BJ (cell line): ENCODE measurements at regions of chr22 and their contacts with region 1.

Region 1: DNA sequence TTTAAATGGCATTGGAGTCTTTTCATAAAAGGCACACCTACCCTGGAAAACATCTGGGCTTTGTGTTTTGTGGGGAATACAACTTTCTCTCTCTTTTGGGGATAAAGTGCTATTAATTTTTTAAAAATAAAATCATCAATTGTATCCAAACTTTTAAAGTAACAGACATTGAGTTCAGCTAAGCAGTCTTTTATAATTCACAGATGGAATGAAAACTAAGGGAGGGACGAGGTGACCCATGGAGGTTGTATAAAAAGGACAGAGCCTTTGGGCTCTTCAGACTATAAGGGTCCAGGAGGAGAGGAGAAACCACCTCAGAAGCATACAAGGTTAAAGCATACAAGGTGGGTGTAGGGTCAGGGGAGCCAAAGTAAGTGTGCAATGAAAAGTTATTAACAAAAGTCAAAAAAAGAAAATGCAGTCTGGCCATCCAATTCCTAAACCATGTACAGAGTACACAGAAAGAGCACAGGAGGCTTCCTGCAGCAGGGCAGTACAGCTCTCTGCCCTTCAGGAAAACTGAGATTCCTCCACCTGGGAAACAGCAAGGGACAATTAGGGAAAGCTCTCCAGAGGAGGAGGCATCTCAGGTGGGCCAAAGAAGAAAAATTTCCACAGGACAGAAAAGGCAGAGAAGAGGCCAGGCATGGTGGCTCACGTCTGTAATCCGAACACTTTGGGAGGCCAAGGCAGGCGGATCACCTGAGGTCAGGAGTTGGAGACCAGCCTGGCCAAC is 10.5 kb downstream of the KLHL22 start:
- DNase-seq: no peak
- H3K4me3 ChIP-seq: no peak overlapping the region
- H3K27me3 ChIP-seq: no peaks in the 10 kb centered on the region
- CTCF ChIP-seq: no peak

Region 2: GRCh38 chr22:20503816-20504215 is 18.7 kb after region 1 on chr22:
- CTCF ChIA-PET with region 1: no interaction called
- POLR2A ChIA-PET with region 1: no interaction called
- DNase-seq: no peak
- H3K4me3 ChIP-seq: no peak overlapping the region
- H3K27me3 ChIP-seq: no peaks in the 10 kb centered on the region
- CTCF ChIP-seq: no peak

Region 3: GRCh38 chr22:20531315-20532201 is 46.4 kb after region 1 on chr22:
- CTCF ChIA-PET with region 1: no interaction called
- POLR2A ChIA-PET with region 1: interaction called, 10 read pairs
- DNase-seq: no peak
- H3K4me3 ChIP-seq: no peak overlapping the region
- H3K27me3 ChIP-seq: no peaks in the 10 kb centered on the region
- CTCF ChIP-seq: no peak